Esophagus muscularis mucosa (tissue), 4 donors: ENCODE measurements at regions of chr1 and their contacts with region 1.

Region 1: GRCh38 chr1:89987170-89987819 is 7.6 kb upstream of the ZNF326 start:
- DNase-seq: no peak
- H3K4me3 ChIP-seq: no peak overlapping the region
- H3K27ac ChIP-seq: no peak overlapping the region
- H3K4me1 ChIP-seq: peaks cover 0 to 4% (median 0%) of the 10 kb centered on the region in 4 donors
- H3K27me3 ChIP-seq: no peaks in the 10 kb centered on the region
- CTCF ChIP-seq: peak; percentile 82 to 89 (median 89)
- EP300 ChIP-seq: no peak
- POLR2A ChIP-seq: no peak

Region 2: GRCh38 chr1:89804642-89805237 is 182.6 kb before region 1 on chr1:
- intact Hi-C with region 1: loop called (anchors 1 kb)
- DNase-seq: peak; percentile 95
- H3K4me3 ChIP-seq: no peak overlapping the region
- H3K27ac ChIP-seq: no peak overlapping the region
- H3K4me1 ChIP-seq: peaks cover 0 to 8% (median 4%) of the 10 kb centered on the region in 4 donors
- H3K27me3 ChIP-seq: no peaks in the 10 kb centered on the region
- CTCF ChIP-seq: peak; percentile 86 to 91 (median 87)
- EP300 ChIP-seq: no peak
- POLR2A ChIP-seq: no peak

Region 3: DNA sequence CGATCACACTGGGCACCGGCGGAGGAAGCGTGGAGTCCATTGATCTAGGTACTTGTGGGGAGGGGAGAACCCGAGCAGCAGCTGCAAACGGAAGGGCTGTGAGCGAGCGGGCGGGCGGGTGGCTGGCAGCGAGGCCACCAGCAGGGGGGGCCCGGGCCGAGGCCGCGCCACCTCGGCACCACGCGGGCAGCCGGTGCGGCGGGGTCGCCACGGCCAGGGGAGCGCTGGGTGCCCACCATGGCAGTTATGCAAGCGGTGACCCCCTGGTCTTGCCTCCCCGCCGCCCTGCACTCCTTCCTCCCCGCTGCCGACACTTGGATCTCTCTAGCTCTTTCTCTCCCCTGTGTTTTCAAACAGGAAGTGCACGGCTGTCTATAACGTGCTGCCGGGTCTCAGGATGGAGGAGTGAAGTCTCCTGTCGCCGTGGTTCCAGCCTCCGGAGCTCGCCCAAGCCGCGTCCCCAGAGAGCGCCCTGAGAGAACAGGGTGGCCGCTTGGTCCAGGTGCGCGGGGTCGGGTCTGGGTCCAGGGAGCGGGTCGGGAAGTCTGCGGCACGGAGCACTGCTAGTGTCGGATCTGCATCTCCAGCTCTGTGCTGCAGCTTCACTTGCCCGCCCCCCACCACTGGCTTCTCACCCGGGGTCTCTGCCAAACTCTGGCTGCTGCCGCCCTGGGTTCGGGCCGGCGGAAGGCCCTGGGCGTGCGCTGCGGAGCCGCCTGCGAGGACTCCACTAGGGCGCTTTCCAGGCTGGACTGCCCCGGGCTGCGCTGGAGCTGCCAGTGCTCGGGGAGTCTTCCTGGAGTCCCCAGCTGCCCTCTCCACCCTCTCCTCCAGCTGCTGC is 143.8 kb before region 1 on chr1:
- intact Hi-C with region 1: loop called (anchors 2 kb)
- DNase-seq: peak; percentile 92
- H3K4me3 ChIP-seq: peak overlapping the region; percentile 75 to 84 (median 76)
- H3K27ac ChIP-seq: peak overlapping the region; percentile 73 to 82 (median 77)
- H3K4me1 ChIP-seq: peaks cover 12 to 22% (median 17%) of the 10 kb centered on the region in 4 donors
- H3K27me3 ChIP-seq: no peaks in the 10 kb centered on the region
- CTCF ChIP-seq: peak; percentile 58 to 76 (median 63)
- EP300 ChIP-seq: no peak
- POLR2A ChIP-seq: no peak